Uterus (tissue), 4 donors: ENCODE measurements at regions of chr22 and their contacts with region 1.

Region 1: GRCh38 chr22:41596776-41597634 is 7.4 kb upstream of the PMM1 start:
- DNase-seq: peak in 1 of 2 donors; percentile 54
- H3K4me3 ChIP-seq: no peak overlapping the region
- H3K27ac ChIP-seq: peak overlapping the region in 1 of 2 donors; percentile 12
- H3K4me1 ChIP-seq: no peaks in the 10 kb centered on the region
- H3K27me3 ChIP-seq: no peaks in the 10 kb centered on the region
- CTCF ChIP-seq: peak; percentile 54 to 85 (median 71)
- POLR2A ChIP-seq: no peak

Region 2: GRCh38 chr22:41543854-41544670 is 52.9 kb before region 1 on chr22 and contains the start of gene POLR3H:
- intact Hi-C with region 1: loop called (anchors 5 kb)
- DNase-seq: peak; percentile 99
- H3K4me3 ChIP-seq: peak within 1 kb of the TSS; percentile 48 to 93
- H3K27ac ChIP-seq: peak within 1 kb of the TSS; percentile 57 to 90
- H3K4me1 ChIP-seq: peaks cover 6 to 12% of the 10 kb centered on the region in 2 donors
- H3K27me3 ChIP-seq: no peaks in the 10 kb centered on the region
- CTCF ChIP-seq: peak; percentile 64 to 76 (median 72)
- POLR2A ChIP-seq: peak; percentile 56 to 58
- total RNA-seq, gene POLR3H: 3.2 to 41.9 (median 16.6) TPM

Region 3: GRCh38 chr22:41648432-41648831 is 51.4 kb after region 1 on chr22:
- intact Hi-C with region 1: no loop called
- DNase-seq: no peak
- H3K4me3 ChIP-seq: no peak overlapping the region
- H3K27ac ChIP-seq: no peak overlapping the region
- H3K4me1 ChIP-seq: no peaks in the 10 kb centered on the region
- H3K27me3 ChIP-seq: no peaks in the 10 kb centered on the region
- CTCF ChIP-seq: no peak
- POLR2A ChIP-seq: no peak